ENCODE measurements at regions of chr11 and their contacts with region 1.

Region 1: DNA sequence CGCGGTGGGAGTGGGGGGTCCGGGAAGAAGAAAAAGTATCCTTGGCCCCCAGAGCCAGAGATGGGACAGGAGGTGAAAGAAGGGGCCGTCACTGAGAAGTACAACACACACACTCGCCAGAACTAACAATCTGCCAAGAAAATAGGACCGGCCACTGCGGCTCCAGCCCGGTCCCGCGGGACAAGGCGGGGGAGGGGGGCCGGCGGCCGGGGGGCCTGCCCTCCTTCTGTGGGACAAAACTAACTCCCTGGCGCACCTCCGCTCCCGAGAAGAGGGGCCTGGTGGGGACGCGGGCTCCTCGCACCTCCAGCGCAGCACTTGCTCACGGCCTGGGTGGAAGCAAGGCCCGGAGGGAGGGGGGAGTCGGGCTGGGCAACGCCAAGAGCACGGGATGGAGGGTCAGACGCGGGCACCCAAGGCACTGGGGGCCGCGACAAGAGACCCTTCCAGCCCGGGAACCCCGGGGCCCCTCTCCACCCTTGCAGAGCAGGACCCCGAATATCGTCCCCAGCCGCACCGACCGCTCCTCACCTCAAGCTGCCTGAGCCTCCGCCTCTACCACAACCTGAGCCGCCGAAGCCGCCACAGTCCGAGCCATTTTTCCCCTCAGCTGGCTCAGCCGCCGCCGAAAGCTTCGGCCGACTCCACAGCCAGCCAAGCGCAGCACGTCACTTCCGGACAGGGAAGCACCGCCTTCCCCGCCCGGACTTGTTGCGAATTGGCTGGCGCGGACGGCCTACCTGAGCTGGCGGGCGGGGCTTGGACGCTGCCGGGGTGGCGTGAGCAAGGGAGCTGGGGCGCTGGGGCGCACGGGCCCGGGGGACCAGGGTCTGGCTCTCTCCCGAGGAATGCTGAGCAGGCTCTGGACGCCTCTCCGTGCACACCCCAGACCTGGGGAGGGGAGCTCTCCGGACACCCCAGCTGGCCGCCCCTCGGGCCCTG is at the start of gene PIK3C2A:
- DNase-seq: peak; percentile 89 to 95 (median 92)
- H3K4me3 ChIP-seq: peak within 1 kb of the TSS; percentile 96
- H3K4me3 Mint-ChIP-seq: peak within 1 kb of the TSS; percentile 93 to 99 (median 98)
- H3K27ac ChIP-seq: peak within 1 kb of the TSS; percentile 90
- H3K27ac Mint-ChIP-seq: peak within 1 kb of the TSS; percentile 88 to 99 (median 98)
- H3K4me1 ChIP-seq: peaks cover 30% of the 10 kb centered on the region
- H3K4me1 Mint-ChIP-seq: peaks cover 40 to 52% (median 48%) of the 10 kb centered on the region in 3 donors
- H3K27me3 ChIP-seq: no peaks in the 10 kb centered on the region
- H3K27me3 Mint-ChIP-seq: no peaks in the 10 kb centered on the region
- total RNA-seq, gene PIK3C2A: 30.4 to 33.0 TPM

Region 2: DNA sequence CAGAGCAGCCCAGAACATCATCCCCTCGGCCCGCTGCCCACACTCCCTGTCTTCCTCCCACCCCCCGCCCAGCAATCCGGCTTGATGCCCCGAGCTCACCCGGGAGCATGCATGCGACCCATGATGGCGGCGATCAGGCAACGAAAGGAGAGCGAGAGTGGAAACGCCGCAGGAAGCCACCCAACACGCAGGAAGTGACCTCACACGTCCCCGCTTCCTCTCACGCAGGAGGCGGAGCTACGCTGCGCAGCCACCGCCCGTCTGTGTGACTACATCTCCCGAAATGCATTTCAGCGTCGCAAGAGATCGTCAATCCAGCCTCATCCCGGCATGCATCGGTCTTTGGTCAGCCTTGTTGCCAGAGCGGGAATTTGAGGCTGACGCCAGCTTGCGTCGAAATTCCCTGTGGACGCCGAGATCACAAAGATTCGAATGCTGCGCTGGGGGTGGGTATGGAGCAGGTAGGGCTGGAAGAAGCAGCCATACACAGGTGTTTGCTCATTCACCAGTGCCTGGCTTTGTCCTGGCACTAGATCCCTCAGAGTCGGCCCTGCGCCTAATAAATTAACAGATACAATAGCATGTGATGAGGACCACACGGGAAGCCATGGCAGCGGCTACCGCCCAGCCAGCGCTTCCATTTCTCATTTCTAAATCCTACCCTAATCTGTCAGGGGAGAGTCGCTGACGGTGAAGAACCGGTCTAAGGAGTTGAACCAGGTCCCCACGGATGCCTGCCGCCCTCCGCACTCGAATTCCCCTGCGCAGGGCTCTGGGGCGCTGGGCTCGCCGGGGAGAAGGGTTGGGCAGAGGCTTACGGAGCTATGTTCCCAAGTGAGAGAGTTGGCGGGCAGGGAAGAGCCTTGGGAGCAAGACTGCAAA is 129.8 kb before region 1 on chr11 and contains the start of gene RPS13:
- CTCF ChIA-PET with region 1: no interaction called
- POLR2A ChIA-PET with region 1: interaction called, 10 read pairs
- DNase-seq: peak; percentile 89 to 96 (median 92)
- H3K4me3 ChIP-seq: peak within 1 kb of the TSS; percentile 83
- H3K4me3 Mint-ChIP-seq: peak within 1 kb of the TSS; percentile 84 to 99 (median 98)
- H3K27ac ChIP-seq: peak within 1 kb of the TSS; percentile 92
- H3K27ac Mint-ChIP-seq: peak within 1 kb of the TSS; percentile 93 to 99 (median 98)
- H3K4me1 ChIP-seq: peaks cover 21% of the 10 kb centered on the region
- H3K4me1 Mint-ChIP-seq: peaks cover 42 to 45% (median 45%) of the 10 kb centered on the region in 3 donors
- H3K27me3 ChIP-seq: no peaks in the 10 kb centered on the region
- H3K27me3 Mint-ChIP-seq: no peaks in the 10 kb centered on the region
- total RNA-seq, gene RPS13: 1,568 to 1,569 TPM

Measured in CD8-positive, alpha-beta memory T cell (primary cell).